ENCODE measurements at regions of chr13 and their contacts with region 1.

Region 1: GRCh38 chr13:40922437-40923040 is 96.6 kb downstream of the ELF1 start:
- H3K4me3 Mint-ChIP-seq: peak overlapping the region; percentile 17
- H3K27ac Mint-ChIP-seq: peak overlapping the region; percentile 92
- H3K4me1 Mint-ChIP-seq: peaks cover 19% of the 10 kb centered on the region
- H3K27me3 Mint-ChIP-seq: no peaks in the 10 kb centered on the region

Region 2: DNA sequence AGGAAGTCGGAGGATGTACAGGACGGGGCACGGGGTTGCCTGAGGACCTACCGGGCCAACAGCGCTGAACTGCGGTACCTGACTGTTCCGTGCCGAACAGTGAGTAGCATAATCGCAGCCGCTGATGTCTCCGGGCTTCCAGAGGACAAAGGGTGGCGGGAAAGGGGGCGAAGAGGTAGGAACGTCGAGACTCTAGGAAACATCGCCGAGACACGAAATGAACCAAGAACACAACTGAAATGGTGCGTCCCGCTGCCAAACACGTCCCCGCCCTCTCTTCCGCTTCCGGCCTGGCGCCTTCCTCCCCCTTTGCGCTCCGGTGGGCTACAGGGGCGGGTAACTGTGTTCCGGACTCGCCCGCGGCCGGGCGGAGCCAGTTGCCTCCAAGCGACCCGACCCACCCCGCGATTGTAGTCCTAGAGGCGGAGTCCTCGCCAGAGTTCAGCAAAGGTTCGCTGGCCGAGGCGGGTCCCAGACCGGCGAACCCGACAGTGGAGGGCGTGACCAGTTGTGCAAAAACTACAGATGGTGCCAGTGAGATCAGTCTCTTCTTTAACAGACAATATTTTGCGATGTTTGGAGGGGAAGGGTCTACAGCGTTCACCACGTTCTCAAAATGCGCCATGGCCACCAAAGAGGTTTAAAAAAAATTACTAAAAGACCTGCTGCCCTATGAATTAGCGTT is 151.5 kb before region 1 on chr13 and contains the start of gene MRPS31:
- intact Hi-C with region 1: loop called (anchors 10 kb)
- H3K4me3 Mint-ChIP-seq: peak within 1 kb of the TSS; percentile 95
- H3K27ac Mint-ChIP-seq: peak within 1 kb of the TSS; percentile 95
- H3K4me1 Mint-ChIP-seq: peaks cover 13% of the 10 kb centered on the region
- H3K27me3 Mint-ChIP-seq: no peaks in the 10 kb centered on the region

Region 3: DNA sequence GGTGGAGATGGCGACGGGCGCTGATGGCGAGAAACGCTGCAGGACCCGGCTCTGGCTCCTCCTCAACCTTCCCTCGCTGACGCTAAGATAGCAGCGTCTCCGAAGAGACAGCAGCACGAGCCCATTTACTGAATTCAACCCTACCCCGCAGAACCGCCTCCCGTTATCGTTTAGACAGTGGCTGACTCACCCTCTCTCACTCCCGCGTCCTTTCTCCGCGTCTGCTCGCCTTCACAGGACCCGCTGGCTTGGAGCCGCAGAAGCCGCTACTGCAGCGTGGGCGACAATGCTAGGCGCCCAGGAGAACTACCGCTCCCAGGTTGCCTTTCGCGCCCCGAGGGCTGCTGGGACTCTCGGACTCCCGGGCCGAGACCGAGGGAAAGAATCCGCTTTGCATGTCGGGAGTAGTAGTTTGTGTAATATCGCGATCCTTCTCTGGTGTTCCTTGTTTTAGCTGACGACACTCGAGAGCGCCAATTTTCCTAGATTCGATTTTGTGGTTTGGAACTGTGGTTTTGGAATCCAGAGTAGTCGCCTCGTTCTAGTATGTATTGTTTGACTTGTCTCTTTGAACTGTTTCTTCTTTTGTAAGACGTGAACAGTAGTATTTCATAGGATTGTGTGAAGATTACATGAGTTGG is 210.1 kb after region 1 on chr13 and contains the start of gene KBTBD6:
- intact Hi-C with region 1: loop called (anchors 5 kb)
- H3K4me3 Mint-ChIP-seq: peak within 1 kb of the TSS; percentile 96
- H3K27ac Mint-ChIP-seq: peak within 1 kb of the TSS; percentile 85
- H3K4me1 Mint-ChIP-seq: peaks cover 30% of the 10 kb centered on the region
- H3K27me3 Mint-ChIP-seq: no peaks in the 10 kb centered on the region

Region 4: DNA sequence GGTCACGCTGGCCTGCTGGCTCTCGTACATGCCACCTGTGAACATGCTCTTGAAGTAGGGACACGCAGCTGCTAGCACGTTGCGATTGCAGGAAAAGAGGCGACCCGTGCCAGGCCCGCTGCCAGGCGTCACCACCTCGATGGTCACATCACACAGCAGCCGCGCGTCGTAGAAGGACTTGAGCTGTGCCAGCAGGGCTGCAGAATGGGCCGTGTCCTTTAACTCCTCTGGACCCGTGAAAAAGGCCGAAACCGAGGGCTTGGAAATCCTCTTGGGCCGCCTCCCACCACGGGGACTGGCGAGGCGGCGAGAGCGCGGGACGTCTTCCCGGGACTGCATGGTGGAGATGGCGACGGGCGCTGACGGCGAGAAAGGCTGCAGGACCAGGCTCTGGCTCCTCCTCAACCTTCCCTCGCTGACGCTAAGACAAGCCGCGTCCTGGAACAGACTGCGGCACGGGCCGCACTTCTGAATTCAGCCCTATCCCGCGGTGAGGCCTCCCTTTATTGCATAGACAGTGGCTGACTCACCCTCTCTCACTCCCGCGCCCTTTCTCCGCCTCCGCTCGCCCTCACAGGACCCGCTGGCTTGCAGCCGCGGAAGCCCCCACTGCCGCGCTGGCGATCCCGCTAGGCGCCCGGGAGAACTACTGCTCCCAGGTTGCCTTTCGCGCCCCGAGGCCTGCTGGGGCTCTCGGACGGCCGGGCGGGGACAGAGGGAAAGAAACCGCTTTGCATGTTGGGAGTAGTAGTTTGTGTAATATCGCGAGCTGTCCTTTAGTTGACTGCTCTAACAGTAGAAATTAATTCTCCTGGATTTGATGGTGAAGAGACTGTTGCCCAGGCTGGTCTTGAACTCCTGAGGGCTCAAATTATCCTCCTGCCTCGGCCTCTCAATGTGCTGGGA is 271.6 kb after region 1 on chr13 and contains the start of gene KBTBD7:
- intact Hi-C with region 1: loop called (anchors 5 kb)
- H3K4me3 Mint-ChIP-seq: peak within 1 kb of the TSS; percentile 91
- H3K27ac Mint-ChIP-seq: peak within 1 kb of the TSS; percentile 97
- H3K4me1 Mint-ChIP-seq: peaks cover 26% of the 10 kb centered on the region
- H3K27me3 Mint-ChIP-seq: no peaks in the 10 kb centered on the region